Natural killer cell (primary cell): ENCODE measurements at regions of chr5 and their contacts with region 1.

Region 1: GRCh38 chr5:65760504-65761275 is 38.7 kb downstream of the NLN start:
- DNase-seq: peak; percentile 34 to 83
- ATAC-seq: peak; percentile 89 to 100 (median 100)
- H3K4me3 ChIP-seq: no peak overlapping the region
- H3K4me3 Mint-ChIP-seq: no peak overlapping the region
- H3K27ac ChIP-seq: no peak overlapping the region
- H3K27ac Mint-ChIP-seq: no peak overlapping the region
- H3K4me1 ChIP-seq: peaks cover 8% of the 10 kb centered on the region
- H3K4me1 Mint-ChIP-seq: peaks cover 6% of the 10 kb centered on the region in 2 donors
- H3K27me3 ChIP-seq: no peaks in the 10 kb centered on the region
- H3K27me3 Mint-ChIP-seq: peaks cover 0 to 9% of the 10 kb centered on the region in 2 donors
- CTCF ChIP-seq: peak; percentile 62

Region 2: GRCh38 chr5:65790371-65791163 is 29.9 kb after region 1 on chr5:
- intact Hi-C with region 1: loop called (anchors 1 kb)
- DNase-seq: peak; percentile 30 to 50
- ATAC-seq: peak; percentile 86 to 91 (median 88)
- H3K4me3 ChIP-seq: no peak overlapping the region
- H3K4me3 Mint-ChIP-seq: peak overlapping the region; percentile 59
- H3K27ac ChIP-seq: peak overlapping the region; percentile 16
- H3K27ac Mint-ChIP-seq: peak overlapping the region; percentile 85 to 93
- H3K4me1 ChIP-seq: peaks cover 11% of the 10 kb centered on the region
- H3K4me1 Mint-ChIP-seq: peaks cover 18 to 19% of the 10 kb centered on the region in 2 donors
- H3K27me3 ChIP-seq: no peaks in the 10 kb centered on the region
- H3K27me3 Mint-ChIP-seq: no peaks in the 10 kb centered on the region
- CTCF ChIP-seq: no peak

Region 3: DNA sequence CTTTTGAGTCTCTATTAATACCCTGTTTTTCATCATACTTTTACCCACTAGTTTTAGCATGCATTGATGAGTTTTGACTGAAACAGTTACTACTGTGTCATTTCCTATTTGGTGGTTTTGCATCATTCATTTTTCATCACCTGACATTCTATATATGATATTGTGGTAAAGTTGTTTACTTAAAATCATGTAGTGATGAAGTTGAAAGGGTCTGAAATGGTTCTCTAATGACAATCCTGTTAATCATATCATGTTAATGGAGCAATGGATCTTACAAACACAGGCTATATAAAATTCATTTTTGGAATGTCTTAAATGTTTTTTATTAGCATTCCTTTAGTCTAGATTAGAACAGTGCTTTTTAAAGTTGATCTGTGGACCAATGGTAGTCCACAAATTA is 249.8 kb after region 1 on chr5:
- intact Hi-C with region 1: loop called (anchors 10 kb)
- DNase-seq: peak in 1 of 2 donors; percentile 38
- ATAC-seq: peak; percentile 77 to 81 (median 81)
- H3K4me3 ChIP-seq: no peak overlapping the region
- H3K4me3 Mint-ChIP-seq: peak overlapping the region; percentile 32
- H3K27ac ChIP-seq: peak overlapping the region; percentile 30
- H3K27ac Mint-ChIP-seq: peak overlapping the region; percentile 81 to 88
- H3K4me1 ChIP-seq: no peaks in the 10 kb centered on the region
- H3K4me1 Mint-ChIP-seq: peaks cover 46 to 55% of the 10 kb centered on the region in 2 donors
- H3K27me3 ChIP-seq: no peaks in the 10 kb centered on the region
- H3K27me3 Mint-ChIP-seq: no peaks in the 10 kb centered on the region
- CTCF ChIP-seq: no peak

Region 4: DNA sequence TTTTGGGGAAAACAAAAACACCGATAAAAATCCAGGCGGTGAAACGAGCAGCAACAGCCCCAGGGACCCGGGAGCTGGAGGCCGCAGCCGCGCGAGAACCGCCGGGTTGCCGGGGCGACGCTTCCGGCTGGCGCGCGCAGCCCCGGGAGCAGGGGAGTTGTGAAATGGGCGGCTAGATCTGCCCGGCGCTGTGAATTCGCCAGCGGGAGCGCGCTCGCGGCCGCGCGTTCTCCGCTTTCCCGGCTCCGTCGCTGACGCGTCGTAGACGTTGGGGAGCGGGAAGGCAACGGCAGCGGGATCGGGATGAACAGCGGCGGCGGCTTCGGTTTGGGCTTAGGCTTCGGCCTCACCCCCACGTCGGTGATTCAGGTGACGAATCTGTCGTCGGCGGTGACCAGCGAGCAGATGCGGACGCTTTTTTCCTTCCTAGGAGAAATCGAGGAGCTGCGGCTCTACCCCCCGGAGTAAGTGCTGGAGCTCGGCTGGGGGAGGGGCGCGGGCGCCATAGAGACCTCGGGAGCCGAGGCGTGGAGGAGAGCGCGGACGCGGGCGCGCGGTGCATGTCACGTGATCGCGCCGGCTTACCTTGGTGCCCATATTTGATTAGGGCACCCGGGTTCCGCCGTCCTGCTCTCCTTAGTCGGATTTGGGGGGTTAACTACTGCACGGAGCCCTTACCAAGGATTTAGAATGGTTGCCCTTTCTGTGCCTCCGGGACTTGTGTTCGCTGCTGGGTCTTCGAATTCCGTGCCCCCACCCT is 383.6 kb after region 1 on chr5 and contains the start of gene SREK1:
- intact Hi-C with region 1: loop called (anchors 10 kb)
- DNase-seq: peak; percentile 87 to 93
- ATAC-seq: peak; percentile 84 to 93 (median 88)
- H3K4me3 ChIP-seq: peak within 1 kb of the TSS; percentile 91
- H3K4me3 Mint-ChIP-seq: peak within 1 kb of the TSS; percentile 99
- H3K27ac ChIP-seq: peak within 1 kb of the TSS; percentile 98
- H3K27ac Mint-ChIP-seq: peak within 1 kb of the TSS; percentile 99 to 100
- H3K4me1 ChIP-seq: peaks cover 4% of the 10 kb centered on the region
- H3K4me1 Mint-ChIP-seq: peaks cover 34 to 36% of the 10 kb centered on the region in 2 donors
- H3K27me3 ChIP-seq: no peaks in the 10 kb centered on the region
- H3K27me3 Mint-ChIP-seq: no peaks in the 10 kb centered on the region
- CTCF ChIP-seq: no peak
- total RNA-seq, gene SREK1: 151 to 177 (median 168) TPM

Region 5: DNA sequence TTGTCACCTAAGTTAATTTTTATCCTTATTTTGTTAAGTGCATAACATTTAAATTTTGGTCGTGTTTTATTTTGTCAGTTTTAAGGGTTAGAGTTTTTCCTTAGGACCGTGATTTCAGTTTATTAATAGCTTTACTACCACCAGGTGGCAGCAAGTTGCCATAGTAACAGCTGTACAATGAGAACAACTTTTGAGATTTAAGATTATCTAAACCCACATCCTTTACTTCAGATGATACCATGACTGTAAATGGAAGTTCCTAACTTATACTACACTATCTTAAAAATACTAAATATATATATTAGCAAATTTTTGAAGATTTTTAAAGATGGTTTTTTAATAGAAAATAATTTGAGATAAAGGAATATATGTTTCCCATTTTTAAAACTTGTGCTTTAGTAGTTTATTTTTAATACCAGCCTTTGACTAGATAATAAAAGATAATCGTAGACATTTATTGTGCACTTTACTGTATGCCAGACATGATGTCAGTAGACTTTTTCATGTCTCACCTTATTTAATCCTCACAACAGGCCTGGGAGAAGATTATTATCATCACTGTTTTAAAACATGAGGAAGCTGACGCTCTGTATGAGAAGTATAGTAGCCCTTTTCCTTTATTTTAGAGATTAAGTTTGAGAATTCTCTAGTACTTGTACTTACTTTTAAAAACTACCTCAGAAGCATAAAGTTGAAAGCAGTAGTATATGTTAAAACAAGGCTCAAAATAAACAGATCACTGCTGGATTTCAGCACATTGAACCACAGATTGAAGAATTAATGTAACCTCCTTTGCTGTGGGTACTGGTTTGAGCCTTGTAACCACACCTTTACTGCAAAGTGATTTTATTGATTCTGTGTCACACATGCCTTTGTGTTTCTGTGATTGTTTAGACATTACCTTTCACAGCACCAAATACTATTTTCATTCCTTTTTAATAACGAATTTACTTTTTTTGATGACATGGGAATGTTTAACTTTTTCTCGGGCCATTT is 411.0 kb after region 1 on chr5:
- intact Hi-C with region 1: loop called (anchors 10 kb)
- DNase-seq: peak in 1 of 2 donors; percentile 85
- ATAC-seq: peak; percentile 90
- H3K4me3 ChIP-seq: no peak overlapping the region
- H3K4me3 Mint-ChIP-seq: no peak overlapping the region
- H3K27ac ChIP-seq: peak overlapping the region; percentile 38
- H3K27ac Mint-ChIP-seq: peak overlapping the region; percentile 50 to 52
- H3K4me1 ChIP-seq: no peaks in the 10 kb centered on the region
- H3K4me1 Mint-ChIP-seq: peaks cover 10 to 15% of the 10 kb centered on the region in 2 donors
- H3K27me3 ChIP-seq: no peaks in the 10 kb centered on the region
- H3K27me3 Mint-ChIP-seq: no peaks in the 10 kb centered on the region
- CTCF ChIP-seq: peak; percentile 63

Region 6: DNA sequence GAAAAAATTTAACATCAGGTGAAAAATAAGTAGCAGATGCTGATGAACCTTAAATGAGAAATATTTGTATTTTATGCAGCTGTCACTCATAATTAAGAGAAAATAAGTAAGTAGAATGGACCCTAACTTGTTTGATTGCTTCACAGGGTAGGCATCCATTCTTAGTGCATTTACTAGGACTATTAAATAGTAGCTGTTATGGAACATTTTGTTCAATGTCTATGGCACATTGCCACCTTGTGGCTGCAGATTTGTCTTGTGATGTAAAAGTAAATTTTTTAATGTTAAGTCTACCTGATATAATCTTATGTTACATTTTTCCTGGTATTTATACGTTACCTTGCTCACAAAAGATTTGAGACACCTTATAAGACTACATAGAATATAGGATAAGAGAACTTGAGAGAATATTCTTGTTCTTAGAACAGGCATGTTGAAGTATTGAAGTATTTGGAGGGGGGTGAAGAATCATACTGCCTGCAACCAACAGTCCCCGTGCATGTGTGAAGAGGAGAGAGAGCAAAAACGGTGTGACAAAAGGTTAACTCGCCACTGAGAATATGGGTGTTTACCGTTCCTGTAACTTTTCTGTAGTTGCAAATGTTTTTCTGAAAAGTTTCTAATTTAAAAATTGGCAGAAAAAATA is 996.6 kb after region 1 on chr5:
- intact Hi-C with region 1: loop called (anchors 2 kb)
- DNase-seq: peak in 1 of 2 donors; percentile 56
- ATAC-seq: no peak
- H3K4me3 ChIP-seq: no peak overlapping the region
- H3K4me3 Mint-ChIP-seq: no peak overlapping the region
- H3K27ac ChIP-seq: no peak overlapping the region
- H3K27ac Mint-ChIP-seq: no peak overlapping the region
- H3K4me1 ChIP-seq: no peaks in the 10 kb centered on the region
- H3K4me1 Mint-ChIP-seq: no peaks in the 10 kb centered on the region
- H3K27me3 ChIP-seq: no peaks in the 10 kb centered on the region
- H3K27me3 Mint-ChIP-seq: peaks cover 21 to 42% of the 10 kb centered on the region in 2 donors
- CTCF ChIP-seq: no peak